ENCODE measurements at regions of chr2 and their contacts with region 1.

Region 1: DNA sequence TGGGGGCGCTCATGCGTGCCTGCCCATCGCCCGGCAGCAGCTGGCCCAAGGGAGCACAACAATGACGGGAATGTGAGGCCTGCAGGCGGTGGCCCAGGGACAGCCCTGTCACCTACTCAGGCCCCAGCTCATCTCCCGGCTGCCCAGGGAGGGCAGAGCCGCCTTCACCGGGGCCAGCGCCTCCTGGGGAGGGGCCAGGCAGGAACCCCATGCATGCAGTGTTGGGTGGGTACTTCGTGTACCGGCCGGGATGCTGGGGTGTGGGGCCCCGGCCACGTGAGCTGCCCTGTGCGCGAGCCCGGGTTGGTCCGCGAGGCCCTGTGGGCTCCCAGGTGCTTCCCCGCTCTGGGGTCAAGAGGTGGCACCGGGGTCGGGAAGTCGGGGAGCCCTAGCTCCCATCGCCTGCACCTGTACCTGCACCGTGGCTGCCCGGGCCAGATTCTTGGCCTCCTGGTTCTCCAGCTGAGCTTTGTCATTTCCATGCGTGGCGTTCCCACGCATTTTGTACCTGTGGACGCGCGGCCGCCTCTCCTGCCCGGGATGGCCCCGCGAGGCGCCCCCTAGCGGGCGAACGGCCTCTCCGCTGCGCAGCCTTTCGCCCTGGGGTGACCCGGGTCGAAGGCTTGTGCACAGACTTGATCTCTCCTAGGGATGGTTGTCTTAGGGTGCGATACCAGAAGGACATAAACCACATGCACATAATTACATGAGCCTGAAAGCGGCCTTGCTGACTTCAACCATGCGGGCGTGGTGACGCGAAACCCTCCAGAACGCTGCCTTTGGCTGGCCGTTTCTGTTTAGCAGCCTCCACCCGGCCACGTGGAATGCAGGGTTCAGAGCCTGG is 950 bp downstream of the KLHL30 start:
- DNase-seq: no peak
- ATAC-seq: peak; percentile 36
- H3K4me3 ChIP-seq: peak overlapping the region in 1 of 3 experiments; percentile 51; a peak in 1 of 6 replicates
- H3K27ac ChIP-seq: no peak overlapping the region
- H3K4me1 ChIP-seq: peaks cover 59% of the 10 kb centered on the region
- H3K27me3 ChIP-seq: peaks cover 10 to 49% of the 10 kb centered on the region in 2 experiments; a peak in 4 of 5 replicates
- CTCF ChIP-seq: peak; percentile 74
- EP300 ChIP-seq: no peak
- POLR2A ChIP-seq: no peak
- RAD21 ChIP-seq: peak; percentile 61; the same call in 1 of the 2 replicates

Region 2: GRCh38 chr2:237858294-237859081 is 280.9 kb before region 1 on chr2:
- CTCF ChIA-PET with region 1: interaction called, 8 read pairs
- POLR2A ChIA-PET with region 1: no interaction called
- in situ Hi-C with region 1: no loop called
- intact Hi-C with region 1: loop called (anchors 5 kb)
- DNase-seq: peak; percentile 78
- ATAC-seq: peak; percentile 92
- H3K4me3 ChIP-seq: peak overlapping the region in 1 of 3 experiments; percentile 61; a peak in 1 of 6 replicates
- H3K27ac ChIP-seq: no peak overlapping the region
- H3K4me1 ChIP-seq: peaks cover 29% of the 10 kb centered on the region
- H3K27me3 ChIP-seq: peaks cover 8 to 84% of the 10 kb centered on the region in 2 experiments; a peak in 4 of 5 replicates
- CTCF ChIP-seq: peak; percentile 97
- EP300 ChIP-seq: no peak
- POLR2A ChIP-seq: no peak
- RAD21 ChIP-seq: peak; percentile 96

Region 3: GRCh38 chr2:237923481-237924163 is 215.8 kb before region 1 on chr2:
- CTCF ChIA-PET with region 1: interaction called, 5 read pairs
- POLR2A ChIA-PET with region 1: no interaction called
- in situ Hi-C with region 1: no loop called
- intact Hi-C with region 1: loop called (anchors 1 kb)
- DNase-seq: peak; percentile 47
- ATAC-seq: peak; percentile 98
- H3K4me3 ChIP-seq: peak overlapping the region in 1 of 3 experiments; percentile 58; a peak in 2 of 6 replicates
- H3K27ac ChIP-seq: no peak overlapping the region
- H3K4me1 ChIP-seq: peaks cover 8% of the 10 kb centered on the region
- H3K27me3 ChIP-seq: peaks cover 2 to 44% of the 10 kb centered on the region in 2 experiments; a peak in 4 of 5 replicates
- CTCF ChIP-seq: peak; percentile 89
- EP300 ChIP-seq: no peak
- POLR2A ChIP-seq: no peak
- RAD21 ChIP-seq: peak; percentile 95